Common myeloid progenitor, CD34-positive (primary cell): ENCODE measurements at regions of chr2 and their contacts with region 1.

Region 1: GRCh38 chr2:39696838-39697237 is 31.1 kb downstream of the TMEM178A start:
- DNase-seq: peak; percentile 22 to 52 (median 46)
- H3K4me3 ChIP-seq: no peak overlapping the region
- H3K27ac ChIP-seq: no peak overlapping the region
- H3K4me1 ChIP-seq: no peaks in the 10 kb centered on the region
- H3K27me3 ChIP-seq: peaks cover 0 to 2% (median 0%) of the 10 kb centered on the region in 5 experiments

Region 2: DNA sequence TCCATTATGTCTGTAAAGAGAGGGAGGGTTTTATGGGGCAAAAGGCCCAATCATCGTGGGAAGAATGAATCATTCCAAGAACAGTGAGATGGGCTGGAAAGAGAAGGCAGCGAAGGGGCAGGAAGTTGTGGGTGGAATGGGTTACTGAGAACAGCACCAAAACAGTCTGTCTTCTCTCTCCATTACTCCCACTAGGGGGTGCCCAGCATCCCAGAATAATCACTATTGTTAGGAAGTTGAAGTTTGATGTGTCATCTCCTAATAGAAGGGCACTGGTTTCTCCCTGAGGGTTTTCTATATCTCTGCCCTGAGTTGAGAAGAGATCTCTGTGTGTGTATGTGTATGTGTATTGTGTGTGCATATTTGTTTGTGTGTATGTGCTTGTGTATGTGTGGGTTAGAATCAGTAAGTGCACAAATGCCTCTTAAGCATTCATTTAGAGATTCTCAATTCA is 183.2 kb before region 1 on chr2:
- CTCF ChIA-PET with region 1: interaction called, 13 read pairs
- POLR2A ChIA-PET with region 1: no interaction called
- DNase-seq: peak; percentile 68 to 70 (median 69)
- H3K4me3 ChIP-seq: no peak overlapping the region
- H3K27ac ChIP-seq: peak overlapping the region in 1 of 2 experiments; percentile 67
- H3K4me1 ChIP-seq: peaks cover 17 to 54% (median 36%) of the 10 kb centered on the region in 4 experiments
- H3K27me3 ChIP-seq: no peaks in the 10 kb centered on the region

Region 3: GRCh38 chr2:39666491-39667101 is 30.2 kb before region 1 on chr2:
- CTCF ChIA-PET with region 1: no interaction called
- POLR2A ChIA-PET with region 1: no interaction called
- DNase-seq: peak in 1 of 3 donors; percentile 21
- H3K4me3 ChIP-seq: peak overlapping the region in 6 of 7 experiments; percentile 52 to 75 (median 68)
- H3K27ac ChIP-seq: no peak overlapping the region
- H3K4me1 ChIP-seq: peaks cover 4 to 17% (median 14%) of the 10 kb centered on the region in 4 experiments
- H3K27me3 ChIP-seq: peaks cover 8 to 53% (median 19%) of the 10 kb centered on the region in 5 experiments

Region 4: DNA sequence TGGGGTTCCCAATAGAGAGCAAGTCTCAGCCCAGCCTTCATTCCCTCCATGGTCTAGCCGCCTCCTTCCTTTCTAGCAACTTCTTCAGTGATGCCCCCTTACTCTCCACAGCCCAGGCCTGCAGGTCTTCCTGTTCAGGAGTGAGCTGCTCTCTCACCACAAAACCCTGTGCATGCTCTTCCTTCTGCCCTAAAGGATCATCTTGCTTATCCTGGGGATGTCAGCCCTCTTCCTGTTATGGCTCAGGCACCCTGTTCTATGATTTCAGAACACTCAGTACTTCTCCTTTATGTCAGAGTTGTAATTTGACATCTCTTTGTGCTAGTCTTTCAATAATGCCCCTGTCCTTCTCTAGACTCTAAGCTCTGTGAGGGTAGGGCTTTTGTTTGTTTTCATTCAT is 11.7 kb before region 1 on chr2:
- CTCF ChIA-PET with region 1: interaction called, 10 read pairs
- POLR2A ChIA-PET with region 1: no interaction called
- DNase-seq: peak in 2 of 3 donors; percentile 44 to 46
- H3K4me3 ChIP-seq: no peak overlapping the region
- H3K27ac ChIP-seq: no peak overlapping the region
- H3K4me1 ChIP-seq: peaks cover 0 to 9% (median 6%) of the 10 kb centered on the region in 4 experiments
- H3K27me3 ChIP-seq: no peaks in the 10 kb centered on the region